ACHN (cell line): ENCODE measurements at regions of chr12 and their contacts with region 1.

Region 1: DNA sequence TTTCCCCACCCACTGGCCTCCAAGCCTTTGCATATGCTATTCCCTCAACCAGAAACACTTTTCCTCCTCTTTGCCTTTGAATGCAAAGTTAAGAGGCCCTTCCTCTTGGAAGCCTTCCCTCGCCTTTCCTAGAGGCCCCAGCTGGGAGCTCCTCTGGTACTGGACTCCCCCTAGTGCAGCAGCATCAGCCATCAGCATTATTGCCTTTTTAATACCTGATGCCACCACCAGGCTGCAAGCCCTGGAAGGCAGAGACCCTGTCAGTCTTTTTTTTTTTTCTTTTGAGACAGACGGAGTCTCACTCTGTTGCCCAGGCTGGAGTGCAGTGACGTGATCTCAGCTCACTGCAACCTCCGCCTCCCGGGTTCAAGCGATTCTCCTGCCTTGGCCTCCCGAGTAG is 19.1 kb upstream of the PLA2G1B start:
- DNase-seq: no peak

Region 2: DNA sequence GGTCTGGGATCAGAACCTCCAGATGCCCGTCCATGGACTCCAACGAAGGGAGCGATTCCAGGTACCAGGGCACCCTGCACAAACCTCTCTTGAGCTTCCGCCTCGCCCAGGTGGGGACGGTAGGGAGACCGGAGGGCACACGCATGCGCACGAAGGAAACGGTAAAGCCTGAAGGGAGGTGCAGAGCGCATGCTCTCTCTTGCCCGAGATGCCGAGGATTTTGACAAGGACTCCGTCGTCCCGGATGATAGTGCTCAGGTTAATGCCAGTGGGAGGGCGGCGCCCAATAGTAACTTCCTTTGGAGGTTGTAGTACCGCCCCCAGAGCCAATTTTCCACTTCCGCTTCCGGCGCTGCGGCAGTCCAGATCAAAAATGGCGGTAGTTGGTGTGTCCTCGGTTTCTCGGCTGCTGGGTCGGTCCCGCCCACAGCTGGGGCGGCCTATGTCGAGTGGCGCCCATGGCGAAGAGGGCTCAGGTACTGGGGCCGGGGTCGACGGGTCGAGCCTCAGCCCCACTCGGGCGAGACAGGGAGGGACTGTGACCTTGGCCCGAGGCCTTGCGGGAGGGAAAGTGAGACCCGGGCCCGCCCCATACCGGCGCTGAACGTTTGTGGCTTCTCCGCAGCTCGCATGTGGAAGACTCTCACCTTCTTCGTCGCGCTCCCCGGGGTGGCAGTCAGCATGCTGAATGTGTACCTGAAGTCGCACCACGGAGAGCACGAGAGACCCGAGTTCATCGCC is 91.2 kb after region 1 on chr12 and contains the start of gene COX6A1:
- in situ Hi-C with region 1: loop called (anchors 25 kb)
- DNase-seq: peak; percentile 100